Right ventricle myocardium superior (tissue), 1 donor: ENCODE measurements at regions of chr22 and their contacts with region 1.

Region 1: DNA sequence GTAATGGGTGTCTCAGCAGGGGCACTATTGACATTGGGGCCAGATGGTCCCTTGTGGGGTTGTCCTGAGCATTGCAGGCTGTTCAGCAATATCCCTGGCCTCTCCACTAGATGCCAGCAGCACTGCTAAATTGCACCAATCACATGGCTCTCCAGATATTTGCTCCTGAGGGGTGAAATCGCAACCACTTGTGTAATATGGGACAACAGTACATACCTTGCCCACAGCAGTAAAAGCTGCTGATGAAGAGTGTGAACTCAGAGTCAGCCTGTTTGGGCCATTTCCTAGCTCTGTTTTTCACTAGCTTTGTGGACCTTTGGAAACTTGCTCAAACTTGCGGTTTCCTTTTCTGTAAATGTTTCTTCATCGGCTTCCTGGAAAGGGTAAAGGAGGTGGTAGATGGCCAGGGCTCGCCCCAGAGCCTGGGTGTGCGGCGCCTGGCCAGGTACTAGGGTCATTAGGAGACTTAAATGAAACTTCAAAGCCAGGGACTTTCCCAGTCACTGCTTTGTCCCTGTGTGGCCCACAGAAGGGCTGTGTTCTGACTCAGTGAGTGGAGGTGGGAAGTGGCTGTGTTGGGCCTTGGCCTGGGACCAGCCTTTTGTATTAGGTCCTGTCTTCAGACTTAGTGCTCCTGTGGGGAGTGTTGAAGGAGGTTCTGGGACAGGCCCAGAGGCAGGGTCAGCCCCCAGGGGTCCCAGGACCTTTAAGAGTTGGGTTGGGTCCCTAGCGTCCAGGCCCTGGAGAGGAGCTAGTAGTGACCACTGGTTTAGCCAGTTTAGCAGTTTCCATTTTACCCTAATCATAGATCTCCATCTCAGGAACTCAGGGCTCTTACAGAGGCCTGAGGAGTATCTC is 13.1 kb downstream of the NCF4 start:
- DNase-seq: peak; percentile 63
- ATAC-seq: peak; percentile 87

Region 2: DNA sequence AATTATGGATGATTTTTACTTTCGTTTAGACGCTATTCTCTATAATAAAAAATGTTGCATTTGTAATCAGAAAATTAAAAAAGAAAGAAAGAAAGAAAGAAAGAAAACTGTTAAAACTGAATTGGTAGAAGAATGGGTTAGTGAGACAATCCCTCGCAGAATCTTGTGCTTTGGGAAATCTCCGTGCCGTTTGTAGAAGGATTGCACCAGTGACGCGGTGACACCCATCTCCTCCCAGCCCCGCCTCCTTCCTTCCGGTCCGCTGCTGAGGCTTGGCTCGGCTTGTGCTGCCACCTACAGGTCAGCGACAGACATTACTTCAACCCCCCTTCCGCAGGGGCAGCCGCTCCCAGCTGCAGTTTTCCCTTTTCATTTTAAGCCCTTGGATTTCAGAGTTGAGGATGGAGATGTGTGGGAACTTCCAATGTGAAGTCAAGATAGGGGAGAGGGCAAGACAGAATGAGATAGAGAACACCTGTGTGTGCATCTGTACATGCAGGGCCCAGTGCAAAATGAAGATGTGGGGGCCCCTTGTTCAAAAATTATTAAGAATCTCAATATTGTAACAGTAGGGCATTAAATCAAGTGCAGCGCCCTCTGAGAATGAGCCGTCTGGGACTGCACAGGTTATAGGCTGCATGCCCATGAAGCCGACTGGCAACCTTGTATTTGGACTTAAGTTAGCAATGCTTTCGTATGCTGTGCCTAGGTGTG is 104.2 kb after region 1 on chr22:
- intact Hi-C with region 1: loop called (anchors 10 kb)
- DNase-seq: peak; percentile 94
- ATAC-seq: peak; percentile 99

Region 3: DNA sequence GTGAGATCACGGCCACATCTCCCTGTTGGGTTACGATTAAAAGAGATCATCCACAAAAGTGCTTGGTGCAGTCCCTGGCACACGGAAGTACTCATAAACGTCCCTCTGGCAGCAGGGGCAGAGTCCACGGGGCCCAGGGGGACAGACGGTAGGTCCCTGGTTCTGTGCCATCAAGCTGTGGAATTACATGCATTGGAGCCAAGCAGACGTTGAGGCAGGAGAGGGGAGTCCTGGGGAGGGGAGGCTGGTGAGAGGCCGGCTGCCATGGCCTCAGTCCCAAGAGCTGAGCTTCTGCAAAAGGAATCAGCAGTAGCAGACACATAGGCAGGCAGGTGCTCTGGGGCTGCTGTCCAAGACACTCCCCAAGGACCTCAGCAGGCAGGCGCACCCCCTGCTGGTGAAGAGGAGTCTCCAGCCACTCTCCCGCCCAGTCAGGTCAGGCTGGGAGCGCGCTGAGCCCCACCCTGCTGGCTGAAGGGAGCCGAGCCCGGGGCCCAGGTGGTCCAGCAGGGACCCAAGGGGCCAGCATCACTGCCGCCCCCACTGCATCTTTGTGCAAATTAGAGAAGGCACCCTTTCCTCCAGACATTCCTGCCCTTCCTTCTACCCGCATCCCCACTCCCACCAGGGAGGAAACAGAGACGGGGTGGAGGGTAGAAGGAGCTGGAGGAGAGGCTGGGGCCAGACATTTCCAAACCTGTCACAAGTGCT is 170.1 kb after region 1 on chr22:
- intact Hi-C with region 1: loop called (anchors 5 kb)
- DNase-seq: peak; percentile 73
- ATAC-seq: peak; percentile 92